Activated naive CD4-positive, alpha-beta T cell treated with anti-CD3 and anti-CD28 coated beads, Interleukin-2, amount 10 ng/mL, durations not matched to agents 7 days and 5 days (primary cell): ENCODE measurements at regions of chr4 and their contacts with region 1.

Region 1: GRCh38 chr4:102344954-102345794 is at the start of gene SLC39A8:
- DNase-seq: peak; percentile 93
- H3K4me3 Mint-ChIP-seq: peak within 1 kb of the TSS; percentile 83
- H3K27ac Mint-ChIP-seq: peak within 1 kb of the TSS; percentile 98
- H3K4me1 Mint-ChIP-seq: peaks cover 46% of the 10 kb centered on the region
- H3K27me3 Mint-ChIP-seq: peaks cover 14% of the 10 kb centered on the region

Region 2: DNA sequence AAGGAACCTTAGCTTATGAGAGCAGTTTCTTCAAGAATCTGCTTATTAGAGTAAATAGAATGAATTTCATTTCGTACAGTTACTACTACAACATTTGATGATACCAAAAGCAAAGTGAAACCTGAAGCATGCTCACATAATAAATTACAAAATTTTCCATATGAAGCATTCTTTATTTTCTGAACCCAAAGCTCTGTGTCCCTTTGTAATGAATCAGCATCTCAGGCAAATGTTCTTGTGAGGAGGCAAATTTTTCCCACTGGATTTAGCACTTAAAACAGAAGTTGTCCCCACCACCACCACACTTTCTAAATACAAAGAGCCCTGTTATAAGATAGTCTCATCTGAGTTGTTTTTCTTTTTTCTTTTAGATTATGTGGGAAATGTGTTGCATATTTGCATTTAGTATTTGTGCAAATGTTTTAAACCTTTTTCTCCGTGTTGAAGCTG is 85.3 kb after region 1 on chr4:
- CTCF ChIA-PET with region 1: interaction called, 29 read pairs
- DNase-seq: no peak
- H3K4me3 Mint-ChIP-seq: peak overlapping the region; percentile 88
- H3K27ac Mint-ChIP-seq: peak overlapping the region; percentile 84
- H3K4me1 Mint-ChIP-seq: peaks cover 15% of the 10 kb centered on the region
- H3K27me3 Mint-ChIP-seq: peaks cover 10% of the 10 kb centered on the region

Region 3: GRCh38 chr4:102543030-102543928 is 198.1 kb after region 1 on chr4:
- CTCF ChIA-PET with region 1: no interaction called
- DNase-seq: no peak
- H3K4me3 Mint-ChIP-seq: no peak overlapping the region
- H3K27ac Mint-ChIP-seq: no peak overlapping the region
- H3K4me1 Mint-ChIP-seq: peaks cover 39% of the 10 kb centered on the region
- H3K27me3 Mint-ChIP-seq: no peaks in the 10 kb centered on the region

Region 4: GRCh38 chr4:102586644-102587021 is 241.5 kb after region 1 on chr4:
- CTCF ChIA-PET with region 1: no interaction called
- DNase-seq: peak; percentile 78
- H3K4me3 Mint-ChIP-seq: peak overlapping the region; percentile 56
- H3K27ac Mint-ChIP-seq: peak overlapping the region; percentile 88
- H3K4me1 Mint-ChIP-seq: peaks cover 88% of the 10 kb centered on the region
- H3K27me3 Mint-ChIP-seq: no peaks in the 10 kb centered on the region